SK-N-SH (cell line): ENCODE measurements at regions of chr14 and their contacts with region 1.

Region 1: GRCh38 chr14:60349663-60350365 is 100.8 kb downstream of the PPM1A start:
- DNase-seq: peak; percentile 45
- H3K4me3 ChIP-seq: no peak overlapping the region
- H3K27ac ChIP-seq: no peak overlapping the region; a peak in 1 of 4 replicates
- H3K4me1 ChIP-seq: peaks cover 0 to 6% of the 10 kb centered on the region in 2 experiments; a peak in 1 of 4 replicates
- H3K27me3 ChIP-seq: no peaks in the 10 kb centered on the region
- CTCF ChIP-seq: peak; percentile 80
- EP300 ChIP-seq: no peak
- RAD21 ChIP-seq: peak; percentile 78

Region 2: GRCh38 chr14:60331201-60332045 is 18.4 kb before region 1 on chr14:
- CTCF ChIA-PET with region 1: interaction called, 25 read pairs
- POLR2A ChIA-PET with region 1: no interaction called
- DNase-seq: peak; percentile 73
- H3K4me3 ChIP-seq: no peak overlapping the region; a peak in 1 of 4 replicates
- H3K27ac ChIP-seq: no peak overlapping the region
- H3K4me1 ChIP-seq: no peaks in the 10 kb centered on the region; a peak in 1 of 4 replicates
- H3K27me3 ChIP-seq: no peaks in the 10 kb centered on the region; the same call in 1 of the 2 replicates
- CTCF ChIP-seq: peak; percentile 78
- EP300 ChIP-seq: no peak
- RAD21 ChIP-seq: peak; percentile 71

Region 3: GRCh38 chr14:60339571-60339970 is 10.2 kb before region 1 on chr14:
- CTCF ChIA-PET with region 1: interaction called, 17 read pairs
- POLR2A ChIA-PET with region 1: no interaction called
- DNase-seq: no peak
- H3K4me3 ChIP-seq: no peak overlapping the region
- H3K27ac ChIP-seq: no peak overlapping the region
- H3K4me1 ChIP-seq: no peaks in the 10 kb centered on the region
- H3K27me3 ChIP-seq: no peaks in the 10 kb centered on the region
- CTCF ChIP-seq: no peak
- EP300 ChIP-seq: no peak
- RAD21 ChIP-seq: no peak

Region 4: DNA sequence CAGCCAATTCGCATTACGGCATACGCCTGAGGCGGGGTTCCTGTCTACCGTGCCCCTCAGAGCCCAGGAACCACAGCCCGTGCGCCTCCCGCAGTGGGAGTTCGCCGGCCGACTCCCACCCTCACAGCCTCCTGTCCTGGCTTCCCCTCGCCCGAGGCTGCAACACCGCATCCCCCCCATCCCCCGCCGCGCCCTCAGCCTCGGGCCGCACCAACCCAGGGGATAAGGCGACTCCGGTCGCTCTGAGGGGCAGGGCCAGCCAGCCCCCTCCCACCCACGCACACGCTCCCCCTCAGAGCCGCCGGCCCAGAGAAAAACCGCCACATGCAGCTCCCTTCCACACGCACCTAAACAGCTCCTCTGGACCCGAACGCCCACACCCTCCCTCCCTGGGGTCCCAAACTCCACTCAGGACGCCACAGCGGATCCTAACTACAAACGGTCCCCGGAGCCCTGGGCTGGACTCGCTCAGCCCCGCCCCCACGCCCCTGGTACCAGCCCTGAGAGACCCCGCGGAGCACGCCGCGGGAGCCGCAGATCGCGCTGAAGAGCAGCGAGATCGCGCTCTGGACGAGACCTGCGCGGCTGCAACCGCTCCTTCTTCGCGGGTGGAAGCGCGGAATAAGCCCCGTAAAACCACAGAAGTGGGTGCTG is 135.9 kb after region 1 on chr14 and contains the start of gene C14orf39:
- CTCF ChIA-PET with region 1: interaction called, 30 read pairs
- POLR2A ChIA-PET with region 1: interaction called, 6 read pairs
- DNase-seq: peak; percentile 84
- H3K4me3 ChIP-seq: peak within 1 kb of the TSS; percentile 64 to 68
- H3K27ac ChIP-seq: peak within 1 kb of the TSS in 1 of 2 experiments; percentile 60; a peak in 1 of 4 replicates
- H3K4me1 ChIP-seq: no peaks in the 10 kb centered on the region; a peak in 1 of 4 replicates
- H3K27me3 ChIP-seq: peaks cover 8% of the 10 kb centered on the region; the same call in 1 of the 2 replicates
- CTCF ChIP-seq: no peak
- EP300 ChIP-seq: no peak
- RAD21 ChIP-seq: no peak
- polyA plus RNA-seq, gene C14orf39: 0.13 and 0.18 TPM in 2 replicates

Region 5: DNA sequence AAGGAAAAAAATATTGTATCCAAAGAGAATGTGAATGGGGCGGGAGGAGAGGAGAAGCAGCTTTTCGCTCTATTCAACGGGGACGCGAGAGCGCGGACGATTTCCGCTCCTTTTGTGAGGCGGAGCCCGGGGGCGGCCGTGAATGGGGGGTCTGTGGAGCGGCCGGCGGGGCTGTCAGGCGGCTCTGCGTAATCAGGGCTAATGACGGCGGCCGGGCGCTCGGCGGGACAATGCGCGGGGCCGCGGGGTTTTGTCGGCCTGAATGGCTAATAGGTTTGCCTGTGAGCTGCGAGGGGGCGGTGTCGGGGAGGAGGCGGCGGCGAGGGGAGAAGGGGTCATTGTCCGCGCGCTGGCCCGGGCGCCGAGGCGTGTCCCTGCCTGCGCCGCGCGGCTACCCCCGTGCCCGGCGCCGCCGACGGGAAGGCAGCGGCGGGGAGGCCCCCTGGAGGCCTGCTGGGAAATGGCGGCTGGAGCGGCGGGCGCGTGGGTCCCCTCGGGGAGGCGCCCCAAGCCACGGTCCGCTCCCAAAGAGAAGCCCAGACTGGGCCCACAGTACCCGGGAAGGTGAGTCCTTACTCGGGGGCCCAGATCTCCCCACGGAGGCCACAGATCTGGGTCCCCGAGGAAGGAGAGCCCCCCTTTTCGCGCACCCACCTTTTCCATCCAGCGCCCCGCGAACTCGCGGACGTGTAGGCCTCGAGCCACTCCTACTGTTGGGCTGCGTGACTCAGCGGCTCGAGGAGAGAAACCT is 165.1 kb after region 1 on chr14:
- CTCF ChIA-PET with region 1: interaction called, 10 read pairs
- POLR2A ChIA-PET with region 1: no interaction called
- DNase-seq: peak; percentile 90
- H3K4me3 ChIP-seq: peak overlapping the region; percentile 62 to 77
- H3K27ac ChIP-seq: no peak overlapping the region
- H3K4me1 ChIP-seq: peaks cover 0 to 9% of the 10 kb centered on the region in 2 experiments; a peak in 1 of 4 replicates
- H3K27me3 ChIP-seq: peaks cover 47% of the 10 kb centered on the region
- CTCF ChIP-seq: peak; percentile 56
- EP300 ChIP-seq: peak in 1 of 2 experiments; percentile 3; a peak in 1 of 4 replicates
- RAD21 ChIP-seq: peak; percentile 25; the same call in 1 of the 2 replicates